Calu3 (cell line): ENCODE measurements at regions of chr10 and their contacts with region 1.

Region 1: GRCh38 chr10:21173812-21174714 is 277.0 kb upstream of the NEBL start:
- DNase-seq: peak; percentile 83
- H3K4me3 Mint-ChIP-seq: peak overlapping the region; percentile 96
- H3K27ac Mint-ChIP-seq: peak overlapping the region; percentile 88
- H3K4me1 Mint-ChIP-seq: peaks cover 19% of the 10 kb centered on the region
- H3K27me3 Mint-ChIP-seq: no peaks in the 10 kb centered on the region
- CTCF ChIP-seq: no peak

Region 2: GRCh38 chr10:21238717-21239116 is 64.7 kb after region 1 on chr10:
- CTCF ChIA-PET with region 1: no interaction called
- intact Hi-C with region 1: loop called (anchors 10 kb)
- DNase-seq: no peak
- H3K4me3 Mint-ChIP-seq: no peak overlapping the region
- H3K27ac Mint-ChIP-seq: no peak overlapping the region
- H3K4me1 Mint-ChIP-seq: peaks cover 10% of the 10 kb centered on the region
- H3K27me3 Mint-ChIP-seq: no peaks in the 10 kb centered on the region
- CTCF ChIP-seq: no peak

Region 3: DNA sequence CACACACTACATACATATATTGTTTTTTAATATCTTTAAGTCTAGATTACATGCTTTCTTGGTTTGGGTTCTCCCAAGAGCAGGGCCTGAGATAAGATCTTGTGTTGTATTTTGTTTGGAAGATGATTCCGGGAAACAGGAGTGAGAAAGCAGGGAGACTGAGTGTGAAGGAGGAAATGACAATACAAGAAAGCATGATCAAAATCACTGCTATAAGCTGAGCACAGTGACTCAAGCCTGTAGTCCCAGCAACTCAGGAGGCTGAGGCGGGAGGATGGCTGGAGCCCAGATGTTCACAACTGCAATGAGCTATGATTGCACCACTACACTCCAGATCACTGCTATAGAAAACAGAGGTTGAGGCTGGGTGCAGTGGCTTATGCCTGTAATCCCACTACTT is 83.9 kb after region 1 on chr10:
- CTCF ChIA-PET with region 1: no interaction called
- intact Hi-C with region 1: no loop called
- DNase-seq: no peak
- H3K4me3 Mint-ChIP-seq: no peak overlapping the region
- H3K27ac Mint-ChIP-seq: no peak overlapping the region
- H3K4me1 Mint-ChIP-seq: no peaks in the 10 kb centered on the region
- H3K27me3 Mint-ChIP-seq: no peaks in the 10 kb centered on the region
- CTCF ChIP-seq: no peak

Region 4: GRCh38 chr10:21273400-21273932 is 99.4 kb after region 1 on chr10:
- CTCF ChIA-PET with region 1: no interaction called
- intact Hi-C with region 1: loop called (anchors 5 kb)
- DNase-seq: no peak
- H3K4me3 Mint-ChIP-seq: no peak overlapping the region
- H3K27ac Mint-ChIP-seq: no peak overlapping the region
- H3K4me1 Mint-ChIP-seq: peaks cover 14% of the 10 kb centered on the region
- H3K27me3 Mint-ChIP-seq: no peaks in the 10 kb centered on the region
- CTCF ChIP-seq: no peak